Mammary epithelial cell (primary cell): ENCODE measurements at regions of chr12 and their contacts with region 1.

Region 1: GRCh38 chr12:12334367-12335040 is 15.5 kb downstream of the MANSC1 start:
- DNase-seq: peak; percentile 25
- H3K4me3 ChIP-seq: no peak overlapping the region
- H3K27ac ChIP-seq: no peak overlapping the region
- H3K4me1 ChIP-seq: peaks cover 26% of the 10 kb centered on the region
- H3K27me3 ChIP-seq: no peaks in the 10 kb centered on the region
- CTCF ChIP-seq: peak; percentile 80 to 81

Region 2: GRCh38 chr12:12356886-12357718 is 22.6 kb after region 1 on chr12 and contains the start of gene BORCS5:
- CTCF ChIA-PET with region 1: no interaction called
- dilution Hi-C with region 1: no loop called
- in situ Hi-C with region 1: no loop called
- intact Hi-C with region 1: loop called (anchors 2 kb)
- DNase-seq: peak; percentile 95
- H3K4me3 ChIP-seq: peak within 1 kb of the TSS; percentile 66 to 82 (median 71)
- H3K27ac ChIP-seq: peak within 1 kb of the TSS; percentile 94
- H3K4me1 ChIP-seq: peaks cover 17% of the 10 kb centered on the region
- H3K27me3 ChIP-seq: no peaks in the 10 kb centered on the region
- CTCF ChIP-seq: peak in 1 of 2 donors; percentile 35
- total RNA-seq, gene BORCS5: 17.9 to 24.8 TPM

Region 3: DNA sequence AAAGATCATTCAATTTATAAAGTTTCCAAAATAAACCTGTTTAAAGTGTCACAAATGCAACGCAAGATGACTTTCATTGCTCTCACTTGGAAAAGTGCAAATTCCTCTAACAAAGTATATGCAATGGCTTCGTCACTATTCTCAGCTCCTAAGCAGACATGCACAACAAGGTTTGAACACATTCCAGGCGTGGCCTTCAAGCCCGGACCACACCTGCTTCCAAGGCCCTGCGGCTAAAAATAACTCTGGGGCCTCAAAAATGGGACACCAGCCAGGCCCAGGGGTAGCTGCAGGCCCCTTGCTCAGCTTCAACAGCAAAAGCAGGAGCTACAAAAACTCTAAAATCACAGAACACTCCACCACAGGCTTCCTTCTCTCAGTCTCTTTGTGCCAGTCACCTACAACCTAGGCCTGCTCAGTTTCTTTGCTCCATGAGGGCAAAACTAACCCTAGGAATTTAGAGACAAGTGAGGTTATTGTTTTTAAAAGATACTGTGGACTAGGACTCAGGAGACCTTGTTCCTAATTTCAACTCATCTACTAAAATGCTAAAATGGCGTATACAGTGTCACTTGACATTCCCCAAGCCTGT is 198.8 kb after region 1 on chr12:
- CTCF ChIA-PET with region 1: no interaction called
- dilution Hi-C with region 1: no loop called
- in situ Hi-C with region 1: no loop called
- intact Hi-C with region 1: no loop called
- DNase-seq: peak; percentile 41
- H3K4me3 ChIP-seq: no peak overlapping the region
- H3K27ac ChIP-seq: peak overlapping the region; percentile 37
- H3K4me1 ChIP-seq: peaks cover 9% of the 10 kb centered on the region
- H3K27me3 ChIP-seq: no peaks in the 10 kb centered on the region
- CTCF ChIP-seq: no peak

Region 4: GRCh38 chr12:12909228-12909994 is 574.9 kb after region 1 on chr12:
- CTCF ChIA-PET with region 1: no interaction called
- dilution Hi-C with region 1: no loop called
- in situ Hi-C with region 1: no loop called
- intact Hi-C with region 1: no loop called
- DNase-seq: no peak
- H3K4me3 ChIP-seq: no peak overlapping the region
- H3K27ac ChIP-seq: no peak overlapping the region
- H3K4me1 ChIP-seq: peaks cover under 1% of the 10 kb centered on the region
- H3K27me3 ChIP-seq: no peaks in the 10 kb centered on the region
- CTCF ChIP-seq: no peak